ENCODE measurements at regions of chr12 and their contacts with region 1.

Region 1: GRCh38 chr12:112125250-112125999 is at the start of gene TRAFD1:
- DNase-seq: peak; percentile 99
- ATAC-seq: peak; percentile 100
- H3K4me3 ChIP-seq: peak within 1 kb of the TSS; percentile 53 to 70
- H3K27ac ChIP-seq: peak within 1 kb of the TSS in 1 of 2 donors; percentile 92
- H3K4me1 ChIP-seq: peaks cover 0 to 2% of the 10 kb centered on the region in 2 donors
- H3K27me3 ChIP-seq: no peaks in the 10 kb centered on the region
- total RNA-seq, gene TRAFD1: 21.2 to 35.5 TPM

Region 2: GRCh38 chr12:111685744-111686517 is 439.5 kb before region 1 on chr12 and contains the starts of genes ACAD10 and BRAP:
- intact Hi-C with region 1: loop called in 1 of 2 experiments (anchors 5 kb)
- DNase-seq: peak; percentile 96 to 98
- ATAC-seq: peak; percentile 97
- H3K4me3 ChIP-seq: peak within 1 kb of the TSS; percentile 69 to 82
- H3K27ac ChIP-seq: peak within 1 kb of the TSS in 1 of 2 donors; percentile 46
- H3K4me1 ChIP-seq: peaks cover 0 to 3% of the 10 kb centered on the region in 2 donors
- H3K27me3 ChIP-seq: no peaks in the 10 kb centered on the region
- total RNA-seq, gene ACAD10: 16.0 to 27.9 TPM
- total RNA-seq, gene BRAP: 14.0 to 18.0 TPM

Region 3: GRCh38 chr12:112153181-112153893 is 27.9 kb after region 1 on chr12:
- intact Hi-C with region 1: no loop called
- DNase-seq: peak; percentile 20 to 34
- ATAC-seq: no peak
- H3K4me3 ChIP-seq: no peak overlapping the region
- H3K27ac ChIP-seq: no peak overlapping the region
- H3K4me1 ChIP-seq: no peaks in the 10 kb centered on the region
- H3K27me3 ChIP-seq: no peaks in the 10 kb centered on the region

Region 4: GRCh38 chr12:112170376-112170775 is 45.0 kb after region 1 on chr12:
- intact Hi-C with region 1: no loop called
- DNase-seq: peak in 1 of 2 donors; percentile 72
- ATAC-seq: no peak
- H3K4me3 ChIP-seq: no peak overlapping the region
- H3K27ac ChIP-seq: no peak overlapping the region
- H3K4me1 ChIP-seq: no peaks in the 10 kb centered on the region
- H3K27me3 ChIP-seq: no peaks in the 10 kb centered on the region